Right ventricle myocardium superior (tissue), 1 donor: ENCODE measurements at regions of chr16 and their contacts with region 1.

Region 1: GRCh38 chr16:3305109-3306068 is at the starts of genes TIGD7 and ZNF75A:
- DNase-seq: peak; percentile 94
- ATAC-seq: peak; percentile 100
- total RNA-seq, gene TIGD7: 9.4 TPM
- total RNA-seq, gene ZNF75A: 16.8 TPM

Region 2: DNA sequence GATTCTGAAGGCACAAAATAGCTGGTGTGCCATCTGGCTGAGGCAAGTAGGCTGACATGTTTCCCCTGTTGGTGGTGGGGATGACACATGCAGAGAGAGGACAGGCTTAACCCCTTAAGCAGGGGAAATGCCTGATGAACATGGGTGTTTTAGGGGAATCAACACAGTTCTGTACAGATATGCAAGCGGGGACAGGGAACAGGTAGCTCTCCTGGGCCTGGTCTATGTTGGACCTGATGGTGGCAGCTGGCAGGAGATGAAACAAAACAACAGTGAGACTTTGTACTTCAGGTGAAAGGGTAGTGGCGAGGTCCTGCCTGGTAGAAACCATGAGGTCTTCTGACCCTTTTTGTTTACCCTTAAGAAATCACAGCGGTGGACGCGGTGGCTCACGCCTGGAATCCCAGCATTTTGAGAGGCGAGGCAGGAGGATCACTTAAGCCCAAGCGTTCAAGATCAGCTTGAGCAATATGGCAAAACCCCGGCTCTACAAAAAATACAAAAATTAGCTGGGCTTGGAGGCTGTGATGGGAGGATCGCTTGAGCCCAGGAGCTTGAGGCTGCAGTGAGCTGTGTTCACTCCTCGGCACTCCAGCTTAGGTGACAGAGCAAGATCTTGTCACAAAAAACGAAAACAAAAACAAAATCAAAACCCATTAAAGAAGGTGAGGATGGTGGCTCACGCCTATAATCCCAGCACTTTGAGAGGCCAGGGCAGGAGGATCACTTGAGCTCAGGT is 106.9 kb before region 1 on chr16:
- intact Hi-C with region 1: no loop called
- DNase-seq: no peak
- ATAC-seq: no peak

Region 3: DNA sequence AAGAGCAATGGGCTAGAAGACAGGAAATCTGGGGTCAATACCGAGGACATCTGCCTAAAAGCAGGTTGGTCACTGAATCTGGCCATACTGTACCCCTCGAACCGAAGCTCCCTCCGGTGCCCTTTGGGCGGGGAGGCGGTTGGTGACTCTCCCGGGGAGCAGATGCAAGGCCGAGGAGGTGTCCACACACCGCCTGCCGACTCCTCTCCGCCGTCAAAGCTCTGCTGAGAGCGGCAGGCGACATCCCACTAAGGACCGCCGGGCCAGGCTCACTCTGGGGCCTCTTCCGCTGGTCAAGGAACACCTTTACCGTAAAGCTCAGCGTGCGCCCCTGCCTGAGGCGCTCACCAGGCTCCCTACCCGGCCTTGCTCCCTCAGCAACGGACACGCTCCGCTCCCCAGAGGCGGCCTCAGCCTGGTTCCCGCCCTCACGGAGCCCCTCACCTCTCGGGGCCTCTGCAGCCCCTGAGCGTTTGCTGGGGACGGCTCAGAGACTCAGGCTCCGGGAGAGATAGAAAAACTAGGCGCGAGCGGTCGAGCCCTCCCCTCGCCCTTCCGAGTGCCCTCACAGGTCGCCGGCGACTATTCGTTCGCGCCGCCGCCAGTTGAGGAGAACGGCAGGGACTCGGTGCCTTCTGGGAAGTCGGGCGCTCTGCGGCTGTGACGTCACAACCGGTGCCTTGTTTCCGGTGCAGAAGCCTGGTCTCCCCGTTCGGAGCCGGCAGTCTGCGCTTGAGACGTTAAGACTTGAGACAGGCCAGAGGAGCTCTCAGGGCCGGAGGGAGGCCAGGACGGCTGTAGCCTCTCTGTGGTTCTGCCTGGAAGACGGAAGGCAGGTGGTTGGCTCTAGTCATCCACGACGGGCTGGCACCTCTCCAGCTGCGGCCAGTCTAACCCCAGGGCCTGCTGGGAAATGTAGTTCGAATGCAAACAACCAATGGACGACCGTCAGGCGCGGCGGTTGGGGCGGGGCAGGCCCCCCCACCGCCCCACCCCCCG is 70.5 kb before region 1 on chr16 and contains the start of gene ZNF200:
- intact Hi-C with region 1: loop called (anchors 10 kb)
- DNase-seq: peak; percentile 99
- ATAC-seq: peak; percentile 100
- total RNA-seq, gene ZNF200: 4.1 TPM

Region 4: DNA sequence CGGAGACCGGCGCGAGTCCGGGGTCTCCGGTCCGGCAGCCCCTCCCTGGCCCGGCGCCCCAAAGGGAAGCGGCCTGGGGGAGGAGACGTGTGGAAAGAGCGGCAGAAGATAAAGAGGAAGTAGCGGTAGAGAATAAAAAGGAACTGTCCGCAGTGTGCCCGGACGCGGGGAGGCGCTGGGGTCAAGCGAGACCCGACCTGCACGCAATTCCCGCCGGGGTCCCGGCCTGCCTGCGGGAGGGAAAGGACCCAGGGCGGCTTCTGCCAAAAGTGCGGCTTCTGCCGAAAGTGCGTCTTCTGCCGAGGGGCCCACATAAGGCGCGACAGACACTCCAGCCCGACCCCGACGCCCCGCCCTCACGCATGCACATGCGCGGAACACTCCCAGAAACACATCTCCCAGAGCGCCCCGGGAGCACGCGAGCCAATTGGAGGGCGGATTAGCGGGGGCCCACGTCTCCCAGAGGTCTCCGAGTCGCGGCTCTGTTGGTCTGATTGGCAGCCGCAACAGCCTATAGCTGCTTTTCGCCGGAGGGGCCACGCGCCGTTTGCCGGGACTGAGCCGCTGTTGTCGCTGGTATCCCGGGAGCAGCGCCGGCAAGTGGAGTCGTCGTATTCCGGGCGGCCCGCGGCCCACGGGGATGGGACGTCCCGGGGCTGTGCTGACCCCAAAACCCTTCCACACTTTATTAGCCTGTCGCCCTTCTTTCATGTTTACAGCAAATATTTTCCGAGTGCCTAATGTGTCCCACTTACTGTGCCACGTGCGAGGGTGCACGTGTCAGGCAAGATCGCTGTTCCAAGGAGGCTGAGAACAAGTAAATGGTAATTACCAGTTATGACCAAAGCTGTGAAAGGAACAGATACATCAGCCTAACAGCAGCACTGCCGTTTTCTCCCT is 41.0 kb before region 1 on chr16:
- intact Hi-C with region 1: loop called (anchors 2 kb)
- DNase-seq: peak; percentile 98
- ATAC-seq: peak; percentile 96

Region 5: GRCh38 chr16:3408561-3409197 is 103.3 kb after region 1 on chr16:
- intact Hi-C with region 1: no loop called
- DNase-seq: no peak
- ATAC-seq: no peak

Region 6: DNA sequence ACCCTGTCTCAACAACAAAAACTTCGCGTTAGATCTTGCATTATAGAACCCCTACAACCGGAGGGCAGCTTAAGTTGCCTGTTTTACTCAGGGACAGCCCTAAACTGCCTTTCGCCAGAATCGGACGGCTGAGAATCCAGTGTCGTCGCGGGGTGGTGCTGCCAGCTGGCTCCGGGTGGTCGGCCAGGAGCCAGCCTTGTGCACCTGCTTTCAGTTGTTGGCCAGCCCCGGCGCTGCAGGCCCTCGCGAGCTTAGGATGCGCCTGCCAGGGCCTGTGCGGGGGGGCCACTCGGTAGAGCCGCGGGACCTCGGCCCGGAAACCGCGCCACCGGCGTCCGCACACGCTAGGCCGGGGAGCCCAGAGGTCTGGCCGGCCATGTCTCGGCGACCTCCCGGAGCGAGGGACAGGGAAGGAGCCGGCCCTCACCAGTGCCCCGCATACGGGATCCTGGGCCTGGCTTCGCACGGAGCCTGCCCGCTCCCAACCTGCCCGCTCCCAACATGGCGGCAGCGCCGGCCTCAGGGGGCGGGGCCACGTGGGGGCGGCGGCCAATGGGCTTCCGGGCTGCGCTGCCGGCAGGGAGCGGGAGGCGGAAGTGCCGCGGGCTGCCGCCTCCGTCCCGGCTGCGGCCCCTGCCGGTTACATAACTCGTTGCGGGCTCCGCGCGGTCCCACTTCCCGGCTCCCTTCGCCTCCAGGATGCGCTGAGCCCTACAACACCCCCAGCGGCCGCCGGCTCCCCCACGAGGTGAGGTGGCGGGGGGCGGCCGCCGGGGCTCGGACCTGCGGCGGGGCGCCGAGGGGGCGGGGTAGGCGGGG is 152.3 kb after region 1 on chr16:
- intact Hi-C with region 1: loop called (anchors 5 kb)
- DNase-seq: peak; percentile 95
- ATAC-seq: peak; percentile 91

Region 7: DNA sequence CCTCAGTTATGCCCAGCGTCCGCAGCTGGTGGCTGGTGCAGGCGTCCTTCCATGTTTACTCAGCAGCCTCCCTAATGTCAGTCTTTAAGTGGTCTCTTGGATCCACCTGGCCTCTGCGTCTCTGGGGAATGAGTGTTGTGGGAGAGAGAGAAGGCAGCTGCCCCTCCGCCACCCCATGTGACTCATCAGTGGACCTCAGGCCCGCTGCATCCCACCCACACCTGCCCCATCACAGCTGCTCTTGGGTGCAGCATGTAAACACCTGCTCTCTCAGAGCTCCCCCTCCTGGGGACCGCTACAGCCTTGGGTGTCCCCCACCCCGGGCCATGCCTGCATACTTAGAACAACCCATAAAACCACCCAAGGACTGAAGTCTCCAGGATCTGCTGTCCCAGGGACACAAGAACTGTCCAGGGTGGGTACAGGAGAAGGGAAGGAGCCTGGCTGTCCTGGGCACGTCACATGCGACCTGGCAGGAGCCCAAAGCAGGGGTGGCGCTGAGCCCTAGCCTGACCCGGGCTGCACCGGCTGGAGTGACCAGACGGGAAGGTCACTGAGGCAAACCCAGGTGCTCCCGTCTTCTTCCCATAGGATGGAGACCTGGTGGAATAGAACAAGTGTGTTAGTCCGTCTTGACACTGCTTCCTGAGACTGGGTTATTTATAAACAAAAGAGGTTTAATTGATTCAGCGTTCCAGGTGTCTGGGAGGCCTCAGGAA is 185.7 kb after region 1 on chr16:
- intact Hi-C with region 1: loop called (anchors 10 kb)
- DNase-seq: peak; percentile 51
- ATAC-seq: peak; percentile 14